Caco-2 (cell line): ENCODE measurements at regions of chr2 and their contacts with region 1.

Region 1: DNA sequence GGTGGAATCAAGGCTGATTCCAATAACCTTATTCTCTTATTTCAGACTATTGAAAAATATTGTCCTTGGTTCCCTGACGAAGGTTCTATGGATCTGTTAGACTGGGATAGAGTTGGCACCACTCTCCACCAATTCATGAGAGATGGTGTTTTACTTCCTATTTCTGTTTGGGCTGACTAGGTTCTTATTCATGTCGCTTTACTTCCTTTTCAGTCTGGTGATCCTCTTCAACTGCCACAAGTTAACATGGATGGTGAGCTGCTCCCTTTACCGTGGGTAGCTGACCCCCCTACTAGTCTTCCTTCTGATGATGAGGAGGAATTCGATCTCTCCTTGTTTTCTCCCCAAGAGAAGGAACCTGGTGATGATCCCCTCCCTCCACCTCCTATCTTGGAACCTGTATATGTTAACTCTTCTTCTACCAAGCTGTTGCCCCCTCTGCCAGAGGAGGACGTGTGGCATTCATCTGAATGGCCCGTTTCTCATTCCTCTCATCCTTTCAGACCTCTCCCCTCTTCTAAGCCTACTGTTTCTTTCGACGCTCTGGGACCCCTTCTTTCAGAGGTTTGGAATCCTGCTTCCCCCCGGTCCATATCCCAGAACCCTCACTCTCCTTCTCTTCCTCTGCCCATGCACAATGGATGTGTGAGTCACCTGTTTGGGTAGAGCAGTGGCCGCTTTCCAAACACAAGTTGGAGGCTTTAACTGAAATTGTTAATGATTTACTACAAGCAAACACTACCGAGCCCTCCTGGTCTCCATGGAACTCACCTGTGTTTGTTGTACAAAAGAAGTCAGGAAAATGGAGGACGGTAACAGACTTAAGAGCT is 13.5 kb upstream of the CNOT11 start:
- DNase-seq: peak; percentile 88
- H3K4me3 ChIP-seq: peak overlapping the region; percentile 24
- H3K4me3 Mint-ChIP-seq: peak overlapping the region; percentile 80
- H3K27ac Mint-ChIP-seq: peak overlapping the region; percentile 98
- H3K4me1 ChIP-seq: peaks cover 58% of the 10 kb centered on the region
- H3K4me1 Mint-ChIP-seq: peaks cover 50% of the 10 kb centered on the region
- H3K27me3 ChIP-seq: no peaks in the 10 kb centered on the region
- H3K27me3 Mint-ChIP-seq: no peaks in the 10 kb centered on the region
- CTCF ChIP-seq: no peak

Region 2: GRCh38 chr2:101219246-101219645 is 19.9 kb before region 1 on chr2:
- CTCF ChIA-PET with region 1: interaction called, 12 read pairs
- POLR2A ChIA-PET with region 1: no interaction called
- intact Hi-C with region 1: no loop called
- DNase-seq: no peak
- H3K4me3 ChIP-seq: no peak overlapping the region
- H3K4me3 Mint-ChIP-seq: no peak overlapping the region
- H3K27ac Mint-ChIP-seq: no peak overlapping the region
- H3K4me1 ChIP-seq: no peaks in the 10 kb centered on the region; the same call in 1 of the 2 replicates
- H3K4me1 Mint-ChIP-seq: peaks cover 5% of the 10 kb centered on the region
- H3K27me3 ChIP-seq: no peaks in the 10 kb centered on the region
- H3K27me3 Mint-ChIP-seq: no peaks in the 10 kb centered on the region
- CTCF ChIP-seq: no peak

Region 3: DNA sequence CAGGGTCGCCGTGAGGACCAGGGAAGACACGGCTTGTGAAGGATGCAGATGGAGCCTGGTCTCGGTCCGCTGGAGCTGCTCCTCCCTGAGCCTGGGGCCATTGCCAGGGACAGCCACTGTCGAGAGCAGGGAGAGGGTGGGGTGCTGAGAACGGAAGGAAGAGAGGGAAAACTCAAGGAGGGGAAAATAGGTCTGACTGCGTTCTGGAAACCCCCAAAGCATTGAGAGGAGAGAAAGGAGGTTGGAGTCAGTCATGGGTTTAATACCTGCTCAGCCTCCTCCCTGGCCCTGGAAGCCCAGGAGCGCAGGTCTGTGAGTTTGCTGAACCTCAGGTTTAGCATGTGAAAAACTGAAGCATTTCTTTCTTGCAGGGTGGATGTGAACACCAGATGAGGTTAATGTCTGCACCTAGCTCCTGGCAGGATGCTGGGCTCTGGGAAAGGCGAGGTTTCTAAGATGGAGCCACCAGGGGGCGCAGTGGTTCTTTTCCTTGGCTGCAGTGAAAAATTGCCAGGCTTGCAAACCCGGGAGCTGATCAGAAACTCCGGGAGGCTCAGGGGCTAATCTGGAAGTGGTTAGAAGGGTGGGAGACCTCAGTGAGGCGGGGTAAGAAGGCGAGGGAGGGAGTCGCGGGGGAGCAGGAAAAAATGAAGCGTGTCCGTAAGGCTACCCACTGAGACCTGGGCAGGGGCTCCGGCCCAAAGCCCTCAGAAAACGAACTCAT is 102.9 kb after region 1 on chr2:
- CTCF ChIA-PET with region 1: no interaction called
- POLR2A ChIA-PET with region 1: no interaction called
- intact Hi-C with region 1: no loop called
- DNase-seq: peak; percentile 86 to 92
- H3K4me3 ChIP-seq: no peak overlapping the region
- H3K4me3 Mint-ChIP-seq: no peak overlapping the region
- H3K27ac Mint-ChIP-seq: peak overlapping the region; percentile 37
- H3K4me1 ChIP-seq: peaks cover 57% of the 10 kb centered on the region
- H3K4me1 Mint-ChIP-seq: peaks cover 49% of the 10 kb centered on the region
- H3K27me3 ChIP-seq: no peaks in the 10 kb centered on the region
- H3K27me3 Mint-ChIP-seq: no peaks in the 10 kb centered on the region
- CTCF ChIP-seq: peak; percentile 88 to 93

Region 4: GRCh38 chr2:101630224-101630949 is 391.2 kb after region 1 on chr2:
- CTCF ChIA-PET with region 1: no interaction called
- POLR2A ChIA-PET with region 1: no interaction called
- intact Hi-C with region 1: no loop called
- DNase-seq: no peak
- H3K4me3 ChIP-seq: no peak overlapping the region
- H3K4me3 Mint-ChIP-seq: no peak overlapping the region
- H3K27ac Mint-ChIP-seq: no peak overlapping the region
- H3K4me1 ChIP-seq: peaks cover 13% of the 10 kb centered on the region
- H3K4me1 Mint-ChIP-seq: peaks cover 13% of the 10 kb centered on the region
- H3K27me3 ChIP-seq: no peaks in the 10 kb centered on the region
- H3K27me3 Mint-ChIP-seq: no peaks in the 10 kb centered on the region
- CTCF ChIP-seq: no peak